Kidney (tissue), 22 donors: ENCODE measurements at regions of chr17 and their contacts with region 1.

Region 1: GRCh38 chr17:32486111-32486700 is 587 bp upstream of the CDK5R1 start:
- DNase-seq: peak; percentile 74 to 93 (median 88)
- H3K4me3 ChIP-seq: peak overlapping the region in 2 of 3 donors; percentile 45 to 46
- H3K27ac ChIP-seq: peak overlapping the region; percentile 27 to 32
- H3K4me1 ChIP-seq: peaks cover 0 to 15% (median 4%) of the 10 kb centered on the region in 3 donors
- H3K27me3 ChIP-seq: no peaks in the 10 kb centered on the region
- CTCF ChIP-seq: no peak

Region 2: DNA sequence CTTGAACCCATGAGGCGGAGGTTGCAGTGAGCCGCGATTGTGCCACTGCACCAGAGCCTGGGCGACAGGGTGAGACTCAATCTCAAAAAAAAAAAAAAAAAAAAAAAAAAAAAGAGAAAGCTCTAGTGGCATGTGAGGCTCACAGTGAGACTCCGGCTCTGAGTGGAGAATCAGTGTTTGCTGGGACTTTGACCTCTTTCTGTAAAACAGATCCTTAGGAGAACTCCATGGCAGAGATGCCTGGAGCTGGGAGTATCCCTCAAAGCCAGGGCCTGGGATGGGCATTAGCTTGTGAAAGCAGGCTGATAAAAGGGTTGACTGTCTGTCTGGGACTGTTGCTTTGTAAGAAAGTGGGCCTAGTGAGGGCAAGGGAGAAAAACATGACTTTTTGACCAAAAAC is 89.9 kb before region 1 on chr17:
- intact Hi-C with region 1: no loop called
- DNase-seq: peak in 1 of 5 donors; percentile 12
- H3K4me3 ChIP-seq: no peak overlapping the region
- H3K27ac ChIP-seq: no peak overlapping the region
- H3K4me1 ChIP-seq: peaks cover 0 to 4% (median 0%) of the 10 kb centered on the region in 3 donors
- H3K27me3 ChIP-seq: no peaks in the 10 kb centered on the region
- CTCF ChIP-seq: no peak

Region 3: DNA sequence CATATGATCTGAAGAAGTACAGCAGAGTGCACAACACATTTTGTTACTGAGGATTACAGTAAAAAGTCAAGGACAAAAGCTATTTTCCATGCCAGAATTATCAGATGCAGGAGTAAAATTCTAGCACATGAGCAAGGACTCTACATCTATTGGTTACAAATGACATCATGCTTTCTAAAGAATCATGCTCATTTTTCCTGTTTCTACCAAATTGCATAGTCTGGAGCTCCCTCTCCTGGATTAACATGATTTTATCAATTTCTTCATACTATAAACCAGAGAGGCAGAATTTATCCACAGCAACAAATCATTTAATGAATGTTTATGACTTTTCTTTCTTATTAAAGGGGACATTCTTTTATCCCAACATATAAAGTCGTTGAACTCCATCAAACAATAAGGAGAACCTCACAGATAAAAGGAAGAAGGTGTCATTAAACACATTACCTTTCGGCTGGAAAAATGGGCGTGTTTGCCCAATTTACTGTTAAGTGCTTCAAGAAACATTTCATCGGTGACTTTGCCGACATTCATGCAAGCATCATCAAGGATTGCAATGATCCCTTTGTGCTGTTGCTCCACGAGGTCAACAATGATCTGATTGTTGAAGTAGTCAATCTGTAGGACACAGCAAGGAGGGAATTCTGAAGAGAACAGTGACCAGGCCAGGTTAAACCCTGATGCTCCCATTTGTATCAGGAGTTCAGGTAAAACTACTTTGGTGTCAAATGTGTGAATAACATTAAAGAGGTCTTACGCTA is 269.0 kb after region 1 on chr17:
- intact Hi-C with region 1: loop called (anchors 10 kb)
- DNase-seq: peak in 2 of 5 donors; percentile 81 to 90
- H3K4me3 ChIP-seq: no peak overlapping the region
- H3K27ac ChIP-seq: no peak overlapping the region
- H3K4me1 ChIP-seq: no peaks in the 10 kb centered on the region
- H3K27me3 ChIP-seq: no peaks in the 10 kb centered on the region
- CTCF ChIP-seq: peak; percentile 54